ENCODE measurements at regions of chr9 and their contacts with region 1.

Region 1: DNA sequence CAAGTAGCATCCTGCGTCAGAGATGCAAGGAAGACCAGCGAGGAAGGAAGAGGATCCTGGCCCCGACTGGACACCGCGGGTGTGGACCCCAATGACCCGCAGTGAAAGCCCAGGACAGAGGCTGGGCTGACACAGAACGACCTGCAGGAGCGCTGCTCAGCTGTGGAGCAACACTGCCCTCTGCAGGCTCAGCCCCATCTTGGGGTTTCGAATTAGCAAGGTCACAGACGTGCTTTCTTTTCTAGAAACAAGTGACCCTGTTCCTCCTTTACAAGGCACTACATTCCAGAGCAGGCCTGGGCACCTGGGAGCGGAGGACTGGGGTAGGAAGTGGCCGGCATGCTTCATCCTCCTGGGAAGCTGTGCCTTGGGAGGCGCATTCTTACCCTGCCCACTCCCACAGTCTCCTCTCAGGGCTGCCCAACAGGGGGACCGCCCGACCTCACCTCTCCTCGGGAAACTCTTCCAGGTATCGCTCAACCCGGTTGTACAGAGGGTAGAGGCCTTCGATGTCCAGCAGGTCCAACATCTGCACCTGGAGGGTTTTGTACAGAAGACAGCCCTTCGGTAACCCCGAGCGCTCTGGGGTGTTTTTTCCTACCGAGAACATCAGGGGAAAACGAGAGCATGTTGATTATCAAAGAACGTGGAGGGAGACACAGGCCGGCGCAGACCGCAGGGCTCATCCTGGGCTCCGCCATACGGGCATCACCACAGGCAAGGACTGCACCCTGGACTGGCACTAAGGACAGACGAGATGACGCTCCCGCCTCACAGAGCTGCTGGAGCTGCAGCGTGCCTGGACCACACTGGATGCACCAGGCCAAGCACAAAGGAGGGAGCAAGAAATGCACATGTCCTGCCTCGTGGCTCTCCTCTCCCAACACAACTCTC is 35.0 kb downstream of the IPPK start:
- DNase-seq: peak; percentile 79
- H3K4me3 ChIP-seq: no peak overlapping the region
- H3K27ac ChIP-seq: no peak overlapping the region
- H3K4me1 ChIP-seq: 0 out of 2 replicates have a peak, but pooled peaks cover 6% of the 10 kb centered on the region
- H3K27me3 ChIP-seq: no peaks in the 10 kb centered on the region

Region 2: DNA sequence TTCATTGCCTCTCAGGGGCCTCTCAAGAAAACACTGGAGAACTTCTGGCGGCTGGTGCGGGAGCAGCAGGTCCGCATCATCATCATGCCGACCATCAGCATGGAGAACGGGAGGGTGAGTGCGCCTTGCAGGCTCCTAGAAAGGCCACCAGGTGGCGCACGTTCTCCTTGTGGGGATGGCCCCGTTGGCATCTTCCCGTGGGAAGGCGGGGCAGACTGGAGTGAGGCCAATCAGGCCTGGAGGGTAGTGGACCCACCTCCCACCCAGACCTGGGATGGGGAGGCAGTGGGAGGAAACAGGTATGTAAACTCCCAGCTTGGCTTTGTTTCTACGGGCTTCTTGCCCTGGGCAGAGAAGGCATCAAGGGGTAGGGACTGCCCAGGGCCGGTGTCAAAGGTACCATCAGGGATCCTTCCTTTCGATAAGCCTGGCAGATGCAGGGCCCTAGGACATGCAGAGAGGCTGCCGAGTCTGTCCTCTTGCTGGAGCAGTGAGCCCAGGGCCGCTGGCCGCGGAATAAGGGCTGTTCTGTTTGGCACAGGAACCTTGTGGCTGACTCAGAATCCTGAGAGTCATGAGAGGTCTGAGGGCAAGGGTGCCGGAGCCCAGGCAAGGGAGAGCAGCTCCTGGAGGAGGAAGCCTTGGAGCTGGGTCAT is 500.9 kb before region 1 on chr9:
- in situ Hi-C with region 1: loop called (anchors 25 kb)
- DNase-seq: peak; percentile 89
- H3K4me3 ChIP-seq: peak overlapping the region; percentile 64
- H3K27ac ChIP-seq: peak overlapping the region; percentile 85
- H3K4me1 ChIP-seq: peaks cover 8% of the 10 kb centered on the region
- H3K27me3 ChIP-seq: no peaks in the 10 kb centered on the region

Region 3: DNA sequence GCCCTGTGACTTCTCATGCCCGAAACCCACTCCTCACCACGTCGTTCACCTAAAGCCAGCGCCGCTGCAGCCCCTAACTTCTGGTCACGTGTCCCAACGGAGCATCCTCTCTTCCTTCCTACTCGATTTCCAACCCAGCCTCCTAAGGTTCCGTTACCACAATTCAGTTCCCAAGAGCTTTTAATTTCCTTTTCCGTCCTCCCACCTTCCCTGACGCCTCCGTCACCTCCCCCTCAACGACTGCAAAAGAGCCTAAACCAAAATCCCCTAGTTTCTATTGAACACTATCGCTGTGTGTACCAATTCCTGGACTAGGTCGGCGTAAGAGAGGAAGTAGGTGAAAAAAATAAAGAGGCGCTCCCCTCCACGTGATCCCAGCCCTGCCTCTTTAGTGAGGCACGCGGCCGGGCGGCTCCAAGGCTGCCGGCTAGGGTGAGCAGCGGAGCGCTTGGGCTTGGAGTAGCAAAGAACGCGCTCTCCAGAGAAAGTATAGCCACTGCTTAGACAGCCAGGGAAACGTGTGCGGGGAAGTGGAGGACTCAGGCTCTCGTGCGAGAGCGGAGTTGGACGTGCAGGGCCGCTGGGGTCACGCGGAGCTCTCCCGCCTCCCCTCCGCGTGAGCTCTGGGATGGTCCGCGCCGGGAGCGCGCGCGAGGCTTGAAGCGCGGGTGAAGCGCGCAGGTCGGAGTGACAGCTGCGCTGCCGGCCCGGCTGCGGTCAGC is 309.5 kb before region 1 on chr9 and contains the starts of genes CENPP and NOL8:
- in situ Hi-C with region 1: loop called (anchors 10 kb)
- DNase-seq: peak; percentile 97
- H3K4me3 ChIP-seq: peak within 1 kb of the TSS; percentile 96
- H3K27ac ChIP-seq: peak within 1 kb of the TSS; percentile 97
- H3K4me1 ChIP-seq: peaks cover 9% of the 10 kb centered on the region; the same call in 1 of the 2 replicates
- H3K27me3 ChIP-seq: no peaks in the 10 kb centered on the region
- total RNA-seq, gene CENPP: 0.38 and 2.5 TPM in 2 replicates
- total RNA-seq, gene NOL8: 10.4 and 15.3 TPM in 2 replicates

Region 4: GRCh38 chr9:92439921-92440750 is 194.8 kb before region 1 on chr9:
- in situ Hi-C with region 1: loop called (anchors 10 kb)
- DNase-seq: peak; percentile 86
- H3K4me3 ChIP-seq: no peak overlapping the region
- H3K27ac ChIP-seq: no peak overlapping the region
- H3K4me1 ChIP-seq: peaks cover 9% of the 10 kb centered on the region
- H3K27me3 ChIP-seq: no peaks in the 10 kb centered on the region

Measured in GM23248 (cell line).